ENCODE measurements at regions of chr2 and their contacts with region 1.

Region 1: GRCh38 chr2:150410809-150411208 is 76.7 kb downstream of the RND3 start:
- DNase-seq: peak; percentile 68 to 77
- H3K4me3 ChIP-seq: no peak overlapping the region
- H3K4me3 Mint-ChIP-seq: peak overlapping the region; percentile 20
- H3K27ac Mint-ChIP-seq: peak overlapping the region; percentile 80
- H3K4me1 ChIP-seq: peaks cover 68% of the 10 kb centered on the region
- H3K4me1 Mint-ChIP-seq: peaks cover 54% of the 10 kb centered on the region
- H3K27me3 ChIP-seq: no peaks in the 10 kb centered on the region
- H3K27me3 Mint-ChIP-seq: no peaks in the 10 kb centered on the region
- CTCF ChIP-seq: no peak

Region 2: GRCh38 chr2:150041722-150042425 is 368.9 kb before region 1 on chr2:
- CTCF ChIA-PET with region 1: no interaction called
- POLR2A ChIA-PET with region 1: no interaction called
- intact Hi-C with region 1: loop called (anchors 5 kb)
- DNase-seq: no peak
- H3K4me3 ChIP-seq: no peak overlapping the region
- H3K4me3 Mint-ChIP-seq: no peak overlapping the region
- H3K27ac Mint-ChIP-seq: no peak overlapping the region
- H3K4me1 ChIP-seq: peaks cover 27% of the 10 kb centered on the region
- H3K4me1 Mint-ChIP-seq: peaks cover 35% of the 10 kb centered on the region
- H3K27me3 ChIP-seq: no peaks in the 10 kb centered on the region
- H3K27me3 Mint-ChIP-seq: no peaks in the 10 kb centered on the region
- CTCF ChIP-seq: no peak

Region 3: DNA sequence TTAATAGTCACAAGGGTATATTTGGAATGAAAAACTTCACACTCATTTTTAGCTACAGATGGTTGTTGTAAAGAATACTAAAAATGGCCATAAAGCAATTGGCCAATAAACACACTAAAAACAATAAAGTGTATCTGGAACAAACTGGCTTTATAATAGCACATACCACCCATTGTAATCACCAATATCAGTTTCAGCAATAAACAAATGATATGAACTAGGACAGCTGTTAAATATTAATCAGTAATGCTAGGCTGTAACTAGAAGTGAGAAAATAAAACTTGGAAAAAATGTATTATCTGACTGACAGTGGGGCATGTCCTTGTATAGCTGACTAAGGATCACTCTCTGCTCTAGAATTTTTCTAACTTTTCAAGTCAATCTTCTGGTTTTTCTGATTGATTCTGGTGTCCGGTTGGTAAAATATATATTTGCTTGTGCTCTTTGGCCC is 235.8 kb before region 1 on chr2:
- CTCF ChIA-PET with region 1: no interaction called
- POLR2A ChIA-PET with region 1: interaction called, 5 read pairs
- intact Hi-C with region 1: loop called (anchors 5 kb)
- DNase-seq: no peak
- H3K4me3 ChIP-seq: no peak overlapping the region
- H3K4me3 Mint-ChIP-seq: no peak overlapping the region
- H3K27ac Mint-ChIP-seq: no peak overlapping the region
- H3K4me1 ChIP-seq: peaks cover 22% of the 10 kb centered on the region
- H3K4me1 Mint-ChIP-seq: peaks cover 26% of the 10 kb centered on the region
- H3K27me3 ChIP-seq: no peaks in the 10 kb centered on the region
- H3K27me3 Mint-ChIP-seq: no peaks in the 10 kb centered on the region
- CTCF ChIP-seq: no peak

Region 4: GRCh38 chr2:150371044-150371812 is 39.6 kb before region 1 on chr2:
- CTCF ChIA-PET with region 1: interaction called, 4 read pairs
- POLR2A ChIA-PET with region 1: interaction called, 4 read pairs
- intact Hi-C with region 1: loop called (anchors 1 kb)
- DNase-seq: peak; percentile 80 to 90
- H3K4me3 ChIP-seq: no peak overlapping the region
- H3K4me3 Mint-ChIP-seq: peak overlapping the region; percentile 19
- H3K27ac Mint-ChIP-seq: peak overlapping the region; percentile 90
- H3K4me1 ChIP-seq: peaks cover 38% of the 10 kb centered on the region
- H3K4me1 Mint-ChIP-seq: peaks cover 23% of the 10 kb centered on the region
- H3K27me3 ChIP-seq: no peaks in the 10 kb centered on the region
- H3K27me3 Mint-ChIP-seq: no peaks in the 10 kb centered on the region
- CTCF ChIP-seq: no peak

Region 5: GRCh38 chr2:150449871-150450270 is 39.1 kb after region 1 on chr2:
- CTCF ChIA-PET with region 1: no interaction called
- POLR2A ChIA-PET with region 1: no interaction called
- intact Hi-C with region 1: loop called (anchors 5 kb)
- DNase-seq: peak; percentile 55 to 56
- H3K4me3 ChIP-seq: no peak overlapping the region
- H3K4me3 Mint-ChIP-seq: peak overlapping the region; percentile 43
- H3K27ac Mint-ChIP-seq: peak overlapping the region; percentile 42
- H3K4me1 ChIP-seq: peaks cover 33% of the 10 kb centered on the region
- H3K4me1 Mint-ChIP-seq: peaks cover 19% of the 10 kb centered on the region
- H3K27me3 ChIP-seq: no peaks in the 10 kb centered on the region
- H3K27me3 Mint-ChIP-seq: no peaks in the 10 kb centered on the region
- CTCF ChIP-seq: no peak

Region 6: GRCh38 chr2:150732064-150732463 is 321.3 kb after region 1 on chr2:
- CTCF ChIA-PET with region 1: no interaction called
- POLR2A ChIA-PET with region 1: no interaction called
- intact Hi-C with region 1: no loop called
- DNase-seq: no peak
- H3K4me3 ChIP-seq: no peak overlapping the region
- H3K4me3 Mint-ChIP-seq: no peak overlapping the region
- H3K27ac Mint-ChIP-seq: no peak overlapping the region
- H3K4me1 ChIP-seq: no peaks in the 10 kb centered on the region
- H3K4me1 Mint-ChIP-seq: no peaks in the 10 kb centered on the region
- H3K27me3 ChIP-seq: no peaks in the 10 kb centered on the region
- H3K27me3 Mint-ChIP-seq: peaks cover 6% of the 10 kb centered on the region
- CTCF ChIP-seq: no peak

Measured in Caco-2 (cell line).